ENCODE measurements at regions of chr15 and their contacts with region 1.

Region 1: GRCh38 chr15:52078876-52079700 is 33.5 kb downstream of the BCL2L10 start:
- DNase-seq: peak; percentile 78 to 91 (median 83)
- ATAC-seq: peak; percentile 79 to 83 (median 80)
- H3K4me3 ChIP-seq: no peak overlapping the region
- H3K27ac ChIP-seq: no peak overlapping the region
- H3K4me1 ChIP-seq: peaks cover 0 to 26% (median 0%) of the 10 kb centered on the region in 12 donors
- H3K27me3 ChIP-seq: no peaks in the 10 kb centered on the region
- CTCF ChIP-seq: peak; percentile 79 to 92 (median 84)
- POLR2A ChIP-seq: no peak

Region 2: GRCh38 chr15:51649659-51650521 is 429.2 kb before region 1 on chr15:
- intact Hi-C with region 1: loop called in 1 of 10 experiments (anchors 10 kb)
- DNase-seq: peak in 2 of 5 donors; percentile 24 to 29
- ATAC-seq: peak; percentile 69 to 83 (median 76)
- H3K4me3 ChIP-seq: no peak overlapping the region
- H3K27ac ChIP-seq: no peak overlapping the region
- H3K4me1 ChIP-seq: peaks cover 0 to 13% (median 0%) of the 10 kb centered on the region in 12 donors
- H3K27me3 ChIP-seq: no peaks in the 10 kb centered on the region
- CTCF ChIP-seq: peak; percentile 55 to 84 (median 77)
- POLR2A ChIP-seq: no peak

Region 3: DNA sequence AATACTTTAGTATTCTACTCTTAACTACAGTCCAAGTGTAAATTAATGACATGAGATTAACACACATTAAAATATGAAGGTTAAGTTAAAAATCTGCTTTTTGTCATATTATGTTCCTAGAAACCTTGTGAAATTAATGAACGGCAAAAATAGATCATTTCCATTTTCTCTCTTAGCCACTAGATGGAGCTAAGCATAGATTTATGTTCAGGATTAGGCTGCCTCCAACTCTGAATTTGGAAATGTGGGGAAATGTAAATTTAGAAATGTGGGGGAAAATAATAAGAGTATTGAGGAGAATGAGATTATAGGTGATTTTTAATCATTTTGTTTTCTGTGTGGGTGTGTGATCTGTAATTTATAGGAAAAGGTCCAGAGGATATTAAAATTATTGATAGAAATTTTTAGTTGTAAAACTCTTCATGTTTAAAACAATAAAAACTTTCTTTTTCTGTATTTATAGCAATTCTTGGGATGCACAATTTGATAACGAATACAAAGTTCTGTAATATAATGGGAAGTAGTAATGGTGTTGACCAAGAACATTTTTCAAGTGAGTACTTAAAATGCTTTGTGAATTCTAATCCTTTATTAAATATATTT is 190.4 kb before region 1 on chr15:
- intact Hi-C with region 1: loop called in 1 of 10 experiments (anchors 5 kb)
- DNase-seq: no peak
- ATAC-seq: no peak
- H3K4me3 ChIP-seq: no peak overlapping the region
- H3K27ac ChIP-seq: no peak overlapping the region
- H3K4me1 ChIP-seq: peaks cover 0 to 25% (median 10%) of the 10 kb centered on the region in 12 donors
- H3K27me3 ChIP-seq: no peaks in the 10 kb centered on the region
- CTCF ChIP-seq: peak; percentile 65 to 86 (median 74)
- POLR2A ChIP-seq: no peak

Region 4: DNA sequence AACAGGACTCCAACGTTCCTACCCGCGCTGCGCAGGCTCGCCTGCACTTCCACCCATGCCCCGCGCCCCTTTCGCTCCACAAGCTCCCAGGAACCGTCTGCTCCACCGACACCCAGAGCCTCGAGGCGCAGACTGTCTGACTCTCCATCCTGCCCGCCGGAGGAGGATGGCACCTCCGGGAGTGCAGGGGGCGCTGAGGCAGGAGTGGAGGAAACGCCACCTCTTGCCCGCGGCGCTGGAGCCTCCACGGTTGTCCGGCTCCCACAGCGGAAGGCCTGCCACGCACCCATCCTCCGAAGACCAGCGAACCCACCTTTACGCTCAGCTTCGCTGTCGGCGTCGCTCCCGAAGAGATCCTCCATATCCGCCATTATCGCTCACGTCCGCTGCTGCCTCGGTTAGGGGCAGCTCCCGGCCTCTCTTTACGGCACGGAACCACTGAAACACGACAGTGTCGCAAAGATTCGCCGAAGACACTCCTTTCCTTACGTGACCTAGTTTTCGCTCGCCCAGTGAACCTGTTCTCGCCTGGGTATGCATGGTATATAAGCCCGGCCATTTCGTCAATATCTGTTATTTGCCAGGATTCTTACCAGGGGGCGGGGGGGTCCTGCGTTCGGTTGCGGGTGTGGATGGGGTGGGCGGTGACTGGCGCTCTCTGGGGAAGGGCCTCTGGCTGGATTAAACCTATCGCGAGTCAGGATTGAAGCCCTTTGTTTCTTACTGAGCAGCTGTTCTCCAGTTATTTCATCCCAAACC is 107.5 kb before region 1 on chr15 and contains the start of gene LEO1:
- intact Hi-C with region 1: loop called in 1 of 10 experiments (anchors 1 kb)
- DNase-seq: peak; percentile 89 to 95 (median 93)
- ATAC-seq: peak; percentile 90 to 98 (median 98)
- H3K4me3 ChIP-seq: peak within 1 kb of the TSS; percentile 71 to 96 (median 90)
- H3K27ac ChIP-seq: peak within 1 kb of the TSS; percentile 83 to 97 (median 92)
- H3K4me1 ChIP-seq: peaks cover 0 to 24% (median 12%) of the 10 kb centered on the region in 12 donors
- H3K27me3 ChIP-seq: no peaks in the 10 kb centered on the region
- CTCF ChIP-seq: peak in 9 of 12 donors; percentile 7 to 71 (median 37)
- POLR2A ChIP-seq: peak in 1 of 2 donors; percentile 40
- total RNA-seq, gene LEO1: 4.9 to 10.4 (median 8.3) TPM

Region 5: GRCh38 chr15:51982013-51982769 is 96.9 kb before region 1 on chr15:
- intact Hi-C with region 1: loop called in 9 of 10 experiments (anchors 2 to 5 kb)
- DNase-seq: peak in 2 of 5 donors; percentile 22 to 44
- ATAC-seq: peak; percentile 53 to 80 (median 77)
- H3K4me3 ChIP-seq: peak overlapping the region in 9 of 12 donors; percentile 9 to 50 (median 34)
- H3K27ac ChIP-seq: peak overlapping the region; percentile 33 to 79 (median 66)
- H3K4me1 ChIP-seq: peaks cover 0 to 24% (median 17%) of the 10 kb centered on the region in 12 donors
- H3K27me3 ChIP-seq: no peaks in the 10 kb centered on the region
- CTCF ChIP-seq: peak; percentile 24 to 63 (median 53)
- POLR2A ChIP-seq: no peak

Region 6: GRCh38 chr15:52031566-52031965 is 47.5 kb before region 1 on chr15:
- intact Hi-C with region 1: no loop called
- DNase-seq: no peak
- ATAC-seq: no peak
- H3K4me3 ChIP-seq: no peak overlapping the region
- H3K27ac ChIP-seq: no peak overlapping the region
- H3K4me1 ChIP-seq: peaks cover 0 to 18% (median 5%) of the 10 kb centered on the region in 12 donors
- H3K27me3 ChIP-seq: no peaks in the 10 kb centered on the region
- CTCF ChIP-seq: no peak
- POLR2A ChIP-seq: no peak